T-cell (primary cell): ENCODE measurements at regions of chr4 and their contacts with region 1.

Region 1: DNA sequence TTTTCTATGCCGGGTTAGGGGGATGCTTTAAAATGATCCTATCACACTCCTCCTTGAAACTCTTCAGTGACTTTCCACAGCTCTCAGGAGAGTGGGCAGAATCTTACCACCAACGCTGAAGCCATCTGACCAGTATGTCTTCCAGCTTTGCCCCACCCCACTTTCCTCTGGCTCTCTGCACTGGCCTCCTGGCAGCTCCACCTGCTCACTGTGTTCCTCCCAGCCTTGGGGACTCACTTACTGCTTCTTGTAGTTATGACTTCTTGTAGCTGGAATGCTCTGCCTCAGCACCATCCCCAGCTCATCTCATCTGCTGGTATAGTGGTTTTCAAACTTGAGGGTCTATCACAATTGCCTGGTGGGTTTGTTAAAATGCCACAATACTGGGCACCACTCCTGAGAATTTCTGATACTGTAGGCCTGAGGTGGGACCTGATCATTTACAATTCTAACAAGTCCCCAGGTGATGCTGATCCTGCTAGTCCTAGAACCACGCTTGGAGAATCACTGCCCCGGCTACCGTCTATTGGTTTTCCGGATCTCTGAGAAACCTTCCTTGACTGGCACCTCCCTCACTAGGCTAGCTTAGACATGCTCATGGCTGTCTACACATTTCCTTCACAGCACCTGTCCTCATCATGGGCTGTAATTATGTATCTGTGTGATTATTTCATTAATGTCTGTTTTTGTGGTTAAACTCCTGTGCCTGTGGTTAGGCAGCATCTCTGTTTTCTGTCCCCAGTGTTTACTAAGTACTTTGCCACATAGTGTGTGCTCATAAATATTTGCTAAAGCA is 152.2 kb downstream of the MGST2 start:
- DNase-seq: no peak
- ATAC-seq: no peak
- H3K4me3 ChIP-seq: no peak overlapping the region
- H3K4me3 Mint-ChIP-seq: no peak overlapping the region
- H3K27ac ChIP-seq: no peak overlapping the region
- H3K27ac Mint-ChIP-seq: no peak overlapping the region
- H3K4me1 ChIP-seq: no peaks in the 10 kb centered on the region
- H3K4me1 Mint-ChIP-seq: peaks cover 0 to 5% (median 2%) of the 10 kb centered on the region in 3 donors
- H3K27me3 ChIP-seq: no peaks in the 10 kb centered on the region
- H3K27me3 Mint-ChIP-seq: no peaks in the 10 kb centered on the region

Region 2: DNA sequence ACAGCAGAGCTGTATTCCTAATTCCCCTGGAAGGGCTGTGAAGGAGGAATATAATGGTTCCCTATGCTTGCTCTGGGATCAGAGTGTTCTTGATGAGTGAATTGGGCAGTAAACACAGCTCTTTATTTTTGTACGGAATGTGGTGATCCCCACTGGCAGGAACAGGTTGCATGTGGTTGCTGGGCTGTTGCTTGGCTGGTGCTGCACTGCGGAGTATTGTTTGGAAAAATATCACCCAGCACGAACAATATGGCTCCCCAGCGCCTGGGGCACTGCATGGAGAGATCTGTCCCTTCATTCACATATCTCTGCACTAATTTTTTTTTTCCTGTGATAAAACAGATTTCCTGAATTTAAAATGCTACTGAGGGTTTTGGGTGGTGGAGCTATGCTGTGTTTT is 32.5 kb before region 1 on chr4:
- CTCF ChIA-PET with region 1: no interaction called
- POLR2A ChIA-PET with region 1: interaction called in 1 of 2 experiments, 10 read pairs
- DNase-seq: no peak
- ATAC-seq: no peak
- H3K4me3 ChIP-seq: no peak overlapping the region
- H3K4me3 Mint-ChIP-seq: no peak overlapping the region
- H3K27ac ChIP-seq: no peak overlapping the region
- H3K27ac Mint-ChIP-seq: no peak overlapping the region
- H3K4me1 ChIP-seq: no peaks in the 10 kb centered on the region
- H3K4me1 Mint-ChIP-seq: no peaks in the 10 kb centered on the region
- H3K27me3 ChIP-seq: peaks cover 0 to 2% of the 10 kb centered on the region in 2 experiments
- H3K27me3 Mint-ChIP-seq: peaks cover 0 to 8% of the 10 kb centered on the region in 2 donors

Region 3: DNA sequence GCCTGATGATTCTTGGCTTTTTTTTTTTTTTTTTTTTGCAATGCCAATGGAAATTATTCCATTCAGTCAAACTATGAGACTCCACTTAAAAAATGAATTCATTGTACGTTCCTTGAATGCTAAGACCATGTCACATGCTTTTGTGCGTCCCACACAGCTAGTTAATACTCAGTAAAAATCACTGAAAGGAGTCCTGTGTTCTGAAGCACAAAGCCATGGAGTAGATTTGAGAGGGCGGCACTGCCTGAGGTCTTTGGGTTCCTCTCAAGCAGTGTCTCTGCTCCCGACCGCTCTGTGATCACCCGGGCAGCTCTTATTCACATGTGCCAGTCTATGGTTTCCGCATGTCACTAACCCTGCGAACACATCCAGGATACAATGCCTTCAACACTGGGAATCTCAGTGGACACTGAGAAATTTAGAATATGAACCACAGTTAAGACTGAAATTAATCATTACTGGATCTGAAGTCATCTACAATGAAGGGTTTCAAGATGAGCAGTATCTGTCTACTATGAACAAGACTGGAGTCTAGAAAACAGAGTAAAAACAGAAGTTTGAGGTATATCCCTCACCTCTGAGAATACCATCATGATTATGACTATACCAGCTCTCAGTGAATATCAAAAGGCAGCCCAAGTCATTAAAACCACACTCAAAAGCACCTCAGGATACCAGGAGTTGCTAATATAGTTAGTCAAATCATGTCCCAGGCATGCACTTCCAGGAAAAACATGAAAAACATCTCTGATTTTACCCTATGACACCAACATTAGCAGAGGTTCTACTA is 40.8 kb after region 1 on chr4:
- CTCF ChIA-PET with region 1: no interaction called
- POLR2A ChIA-PET with region 1: interaction called in 1 of 2 experiments, 11 read pairs
- DNase-seq: no peak
- ATAC-seq: no peak
- H3K4me3 ChIP-seq: no peak overlapping the region
- H3K4me3 Mint-ChIP-seq: no peak overlapping the region
- H3K27ac ChIP-seq: no peak overlapping the region
- H3K27ac Mint-ChIP-seq: no peak overlapping the region
- H3K4me1 ChIP-seq: peaks cover 0 to 18% of the 10 kb centered on the region in 2 experiments
- H3K4me1 Mint-ChIP-seq: peaks cover 15 to 17% (median 15%) of the 10 kb centered on the region in 3 donors
- H3K27me3 ChIP-seq: peaks cover 0 to 4% of the 10 kb centered on the region in 2 experiments
- H3K27me3 Mint-ChIP-seq: no peaks in the 10 kb centered on the region

Region 4: DNA sequence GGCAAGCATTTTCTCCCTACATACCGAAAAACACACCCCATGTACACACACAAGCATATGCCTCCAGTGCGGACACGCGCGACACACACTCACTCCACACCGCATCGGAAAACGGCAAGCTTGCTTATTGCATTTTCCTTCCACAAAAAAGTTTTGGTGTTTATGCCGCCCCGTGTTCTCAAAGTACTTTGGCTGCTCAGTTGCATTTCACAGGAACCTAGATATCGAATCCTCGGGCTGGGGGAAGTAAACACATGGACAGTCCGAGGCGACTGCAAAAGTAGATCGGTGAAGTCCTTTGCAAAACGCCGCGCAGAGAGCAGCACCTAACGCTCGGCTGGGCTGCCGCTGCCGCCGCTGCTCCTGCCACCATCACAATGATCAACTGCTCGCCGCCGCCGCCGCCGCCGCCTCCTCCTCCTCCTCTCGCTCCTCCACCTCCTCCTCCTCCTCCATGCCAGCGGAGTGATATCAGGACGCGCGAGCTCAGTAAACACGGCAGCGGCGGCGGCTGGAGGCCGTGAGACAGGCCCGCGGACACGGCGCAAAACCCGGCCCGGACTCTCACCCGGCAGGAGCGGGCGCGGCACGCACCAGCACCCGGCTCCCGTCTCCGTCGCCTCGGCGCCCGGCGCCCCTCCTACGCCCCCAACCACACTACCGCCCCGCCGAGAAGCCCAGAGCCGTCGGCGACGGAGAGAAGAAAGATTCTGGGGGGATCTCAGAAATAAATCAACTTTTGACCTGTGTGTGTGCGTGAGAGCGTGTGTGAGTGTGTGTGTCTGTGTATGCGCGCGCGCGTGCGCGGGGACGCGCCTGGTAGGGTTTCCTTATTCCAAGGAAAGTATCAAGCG is 336.1 kb after region 1 on chr4 and contains the start of gene MAML3:
- CTCF ChIA-PET with region 1: no interaction called
- POLR2A ChIA-PET with region 1: no interaction called
- DNase-seq: peak; percentile 68 to 86 (median 79)
- ATAC-seq: peak; percentile 22 to 31 (median 28)
- H3K4me3 ChIP-seq: peak within 1 kb of the TSS; percentile 83 to 99
- H3K4me3 Mint-ChIP-seq: peak within 1 kb of the TSS; percentile 94 to 96 (median 95)
- H3K27ac ChIP-seq: peak within 1 kb of the TSS; percentile 56
- H3K27ac Mint-ChIP-seq: peak within 1 kb of the TSS; percentile 88 to 90
- H3K4me1 ChIP-seq: peaks cover 19 to 44% of the 10 kb centered on the region in 2 experiments
- H3K4me1 Mint-ChIP-seq: peaks cover 37 to 45% (median 37%) of the 10 kb centered on the region in 3 donors
- H3K27me3 ChIP-seq: peaks cover 0 to 27% of the 10 kb centered on the region in 2 experiments
- H3K27me3 Mint-ChIP-seq: no peaks in the 10 kb centered on the region
- total RNA-seq, gene MAML3: 2.0 to 3.4 (median 2.7) TPM

Region 5: DNA sequence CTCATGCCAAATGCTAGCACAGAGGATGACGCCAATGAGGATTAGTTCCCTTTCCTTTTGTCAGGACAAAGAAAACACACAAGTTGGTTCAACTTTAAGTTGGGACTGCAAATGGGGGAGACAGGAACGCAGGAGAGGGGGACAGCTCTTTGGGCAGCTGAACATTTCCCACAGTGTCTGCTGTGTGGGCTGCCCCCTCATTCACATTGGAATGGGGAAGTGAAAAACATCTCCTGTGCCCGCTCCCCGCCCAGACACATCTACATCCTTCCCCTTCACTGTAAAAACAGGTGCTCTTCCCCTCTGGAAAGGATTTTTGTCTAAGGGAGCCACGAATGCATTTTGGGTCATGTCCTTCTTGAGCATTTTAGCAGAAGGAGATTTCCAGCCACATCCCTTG is 982.8 kb after region 1 on chr4:
- CTCF ChIA-PET with region 1: no interaction called
- POLR2A ChIA-PET with region 1: no interaction called
- DNase-seq: no peak
- ATAC-seq: no peak
- H3K4me3 ChIP-seq: no peak overlapping the region
- H3K4me3 Mint-ChIP-seq: no peak overlapping the region
- H3K27ac ChIP-seq: no peak overlapping the region
- H3K27ac Mint-ChIP-seq: no peak overlapping the region
- H3K4me1 ChIP-seq: no peaks in the 10 kb centered on the region
- H3K4me1 Mint-ChIP-seq: peaks cover 0 to 6% (median 0%) of the 10 kb centered on the region in 3 donors
- H3K27me3 ChIP-seq: no peaks in the 10 kb centered on the region
- H3K27me3 Mint-ChIP-seq: peaks cover 10 to 15% of the 10 kb centered on the region in 2 donors